ENCODE measurements at regions of chr14 and their contacts with region 1.

Region 1: DNA sequence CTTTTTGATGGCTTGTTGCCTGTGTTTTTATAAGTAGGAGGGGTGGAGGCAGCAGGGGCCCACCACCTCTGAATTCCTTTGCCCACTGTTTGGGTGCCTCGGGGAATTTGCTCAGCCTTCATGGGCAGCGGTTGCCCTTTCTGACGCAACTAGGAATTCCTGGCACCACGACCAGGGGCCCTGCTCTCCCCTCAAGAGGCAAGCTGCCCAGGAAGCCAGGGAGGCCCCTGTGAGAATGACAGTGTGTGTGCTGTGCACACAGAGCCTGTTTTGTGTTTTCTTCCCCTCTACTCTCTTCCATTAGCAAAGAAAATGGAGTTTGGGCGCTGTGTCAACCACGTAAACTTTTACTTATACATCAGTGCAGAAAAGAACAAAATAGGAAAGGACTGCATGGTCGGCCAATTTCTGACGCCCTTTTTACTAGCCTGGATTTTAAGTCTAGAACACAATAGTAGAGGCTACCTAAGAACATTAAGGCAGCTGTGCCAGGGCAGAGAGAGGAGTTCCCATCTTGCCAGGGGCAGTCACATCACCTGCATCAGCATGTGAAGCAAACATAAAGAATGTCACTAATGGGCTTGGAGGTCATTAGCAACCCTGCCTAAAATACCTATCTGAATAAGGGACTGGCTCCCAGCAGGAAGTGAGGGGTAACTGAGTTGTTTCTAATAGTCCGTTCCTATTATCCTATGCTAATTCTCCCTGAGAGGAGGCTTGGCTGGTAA is 17.9 kb upstream of the PTGR2 start:
- DNase-seq: no peak
- ATAC-seq: no peak
- H3K4me3 ChIP-seq: no peak overlapping the region
- H3K27ac ChIP-seq: no peak overlapping the region
- H3K4me1 ChIP-seq: peaks cover 0 to 6% of the 10 kb centered on the region in 2 experiments; a peak in 3 of 5 replicates
- H3K27me3 ChIP-seq: no peaks in the 10 kb centered on the region
- CTCF ChIP-seq: no peak
- EP300 ChIP-seq: no peak
- POLR2A ChIP-seq: no peak
- RAD21 ChIP-seq: no peak

Region 2: DNA sequence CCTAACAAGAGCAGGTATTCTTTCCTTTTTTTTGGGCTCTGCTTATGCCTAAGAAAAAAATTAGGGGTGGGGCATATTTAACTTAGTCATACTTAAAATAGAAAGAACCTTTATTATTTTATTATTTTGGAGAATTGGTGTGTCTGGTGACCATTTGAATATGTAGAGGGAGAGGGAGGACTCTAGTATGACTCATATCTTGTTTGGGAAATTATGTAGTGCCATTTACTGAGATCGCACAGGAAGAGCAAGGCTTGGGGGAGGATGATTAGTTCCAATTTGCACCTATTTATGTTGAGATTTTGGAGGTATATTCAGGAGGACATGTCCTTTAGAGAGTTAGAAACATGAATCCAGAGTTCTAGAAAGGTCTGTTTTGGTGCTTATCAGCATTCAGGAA is 62.8 kb after region 1 on chr14:
- CTCF ChIA-PET with region 1: no interaction called
- POLR2A ChIA-PET with region 1: no interaction called
- in situ Hi-C with region 1: no loop called
- intact Hi-C with region 1: loop called (anchors 2 kb)
- DNase-seq: no peak
- ATAC-seq: no peak
- H3K4me3 ChIP-seq: no peak overlapping the region
- H3K27ac ChIP-seq: no peak overlapping the region
- H3K4me1 ChIP-seq: no peaks in the 10 kb centered on the region; a peak in 1 of 5 replicates
- H3K27me3 ChIP-seq: no peaks in the 10 kb centered on the region
- CTCF ChIP-seq: no peak
- EP300 ChIP-seq: no peak
- POLR2A ChIP-seq: no peak
- RAD21 ChIP-seq: no peak

Measured in K562 (cell line).